Transverse colon (tissue), 4 donors: ENCODE measurements at regions of chr18 and their contacts with region 1.

Region 1: DNA sequence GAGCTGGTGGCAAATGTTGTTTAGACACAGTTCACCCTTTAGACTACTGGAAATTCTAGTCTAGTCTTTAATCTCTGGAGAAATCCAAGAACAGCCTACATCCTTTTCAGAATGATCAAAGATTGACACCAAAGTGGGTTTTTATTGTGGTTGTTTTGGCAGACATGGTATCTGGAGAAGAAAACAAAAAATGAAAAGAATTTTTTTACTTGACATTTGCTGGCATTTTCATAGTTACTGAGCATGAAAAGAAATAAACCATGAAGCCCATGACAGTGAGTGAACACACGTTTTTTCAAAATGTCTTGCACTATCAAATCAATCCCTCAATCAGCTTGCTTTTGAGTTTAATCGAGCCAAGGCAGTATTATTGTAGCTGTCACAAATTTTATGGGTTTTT is 125.3 kb downstream of the CCBE1 start:
- DNase-seq: no peak
- H3K4me3 ChIP-seq: no peak overlapping the region
- H3K27ac ChIP-seq: no peak overlapping the region
- H3K4me1 ChIP-seq: no peaks in the 10 kb centered on the region
- H3K27me3 ChIP-seq: no peaks in the 10 kb centered on the region
- CTCF ChIP-seq: no peak
- EP300 ChIP-seq: no peak
- POLR2A ChIP-seq: no peak

Region 2: GRCh38 chr18:59432803-59433597 is 138.9 kb before region 1 on chr18:
- in situ Hi-C with region 1: no loop called
- intact Hi-C with region 1: no loop called
- DNase-seq: no peak
- H3K4me3 ChIP-seq: no peak overlapping the region
- H3K27ac ChIP-seq: no peak overlapping the region
- H3K4me1 ChIP-seq: no peaks in the 10 kb centered on the region
- H3K27me3 ChIP-seq: no peaks in the 10 kb centered on the region
- CTCF ChIP-seq: no peak
- EP300 ChIP-seq: no peak
- POLR2A ChIP-seq: no peak

Region 3: GRCh38 chr18:59593291-59593717 is 21.4 kb after region 1 on chr18:
- in situ Hi-C with region 1: no loop called
- intact Hi-C with region 1: loop called (anchors 2 kb)
- DNase-seq: no peak
- H3K4me3 ChIP-seq: no peak overlapping the region
- H3K27ac ChIP-seq: no peak overlapping the region
- H3K4me1 ChIP-seq: peaks cover 0 to 8% (median 0%) of the 10 kb centered on the region in 4 donors
- H3K27me3 ChIP-seq: no peaks in the 10 kb centered on the region
- CTCF ChIP-seq: no peak
- EP300 ChIP-seq: no peak
- POLR2A ChIP-seq: no peak